Lower leg skin (tissue), 4 donors: ENCODE measurements at regions of chr4 and their contacts with region 1.

Region 1: GRCh38 chr4:123396307-123397143 is at the start of gene SPRY1:
- DNase-seq: peak; percentile 95 to 97
- H3K4me3 ChIP-seq: peak within 1 kb of the TSS; percentile 65
- CTCF ChIP-seq: no peak
- POLR2A ChIP-seq: peak in 1 of 2 donors; percentile 27
- total RNA-seq, gene SPRY1: 216 to 444 (median 274) TPM

Region 2: GRCh38 chr4:121390335-121390734 is 2006.2 kb before region 1 on chr4:
- intact Hi-C with region 1: no loop called
- DNase-seq: no peak
- H3K4me3 ChIP-seq: no peak overlapping the region
- CTCF ChIP-seq: no peak
- POLR2A ChIP-seq: no peak

Region 3: GRCh38 chr4:123438031-123438430 is 41.5 kb after region 1 on chr4:
- intact Hi-C with region 1: no loop called
- DNase-seq: no peak
- H3K4me3 ChIP-seq: no peak overlapping the region
- CTCF ChIP-seq: no peak
- POLR2A ChIP-seq: no peak

Region 4: DNA sequence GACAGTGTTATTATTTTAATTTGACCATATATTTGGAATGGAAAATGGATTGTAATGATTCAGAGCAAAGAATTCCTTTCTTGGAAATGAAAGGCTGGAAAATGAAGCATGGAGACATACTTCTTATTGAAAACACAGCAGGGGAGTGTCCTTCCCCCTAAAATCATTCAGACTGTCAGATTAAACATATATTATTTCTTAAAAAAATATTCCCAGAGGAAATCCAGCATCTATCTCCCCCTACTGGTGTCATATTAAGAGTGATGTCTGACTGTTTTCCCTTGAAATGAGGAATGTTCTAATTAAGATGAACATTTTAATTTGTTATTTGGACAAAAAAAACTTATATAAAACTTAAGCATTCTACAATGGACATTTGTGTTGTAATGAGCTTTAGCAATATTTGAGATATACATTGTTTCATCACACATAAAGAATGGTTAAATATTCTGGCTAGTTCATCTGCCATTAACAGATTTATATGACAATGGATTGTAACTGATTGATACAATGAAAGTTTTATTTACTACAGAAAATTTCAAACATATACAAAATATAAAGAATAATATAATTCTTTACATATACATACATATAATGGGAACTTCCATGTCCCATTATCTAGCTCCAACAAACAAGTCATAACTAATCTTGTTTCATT is 264.7 kb after region 1 on chr4:
- intact Hi-C with region 1: loop called (anchors 10 kb)
- DNase-seq: no peak
- H3K4me3 ChIP-seq: no peak overlapping the region
- CTCF ChIP-seq: peak in 1 of 3 donors; percentile 39
- POLR2A ChIP-seq: no peak

Region 5: DNA sequence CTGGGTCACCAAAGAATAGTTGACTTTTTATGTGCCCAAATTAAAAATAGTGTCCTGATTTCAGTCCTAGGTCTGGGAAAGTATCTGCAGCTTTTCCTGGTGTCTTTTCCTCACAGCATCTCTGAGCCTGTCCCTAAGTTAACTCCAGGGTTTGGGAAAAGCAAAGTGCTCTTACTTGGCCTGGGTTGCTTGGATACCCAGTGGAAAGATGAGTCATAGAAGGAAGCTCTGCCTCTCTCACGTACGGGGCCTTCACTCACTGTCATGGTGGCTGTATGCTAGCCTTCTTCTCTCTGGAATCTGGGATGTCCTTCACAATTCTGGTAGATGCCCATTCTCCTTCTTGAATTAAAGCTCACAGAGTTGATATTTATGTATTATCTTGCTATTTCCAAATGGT is 708.7 kb after region 1 on chr4:
- intact Hi-C with region 1: loop called (anchors 10 kb)
- DNase-seq: no peak
- H3K4me3 ChIP-seq: no peak overlapping the region
- CTCF ChIP-seq: no peak
- POLR2A ChIP-seq: no peak